ENCODE measurements at regions of chr21 and their contacts with region 1.

Region 1: DNA sequence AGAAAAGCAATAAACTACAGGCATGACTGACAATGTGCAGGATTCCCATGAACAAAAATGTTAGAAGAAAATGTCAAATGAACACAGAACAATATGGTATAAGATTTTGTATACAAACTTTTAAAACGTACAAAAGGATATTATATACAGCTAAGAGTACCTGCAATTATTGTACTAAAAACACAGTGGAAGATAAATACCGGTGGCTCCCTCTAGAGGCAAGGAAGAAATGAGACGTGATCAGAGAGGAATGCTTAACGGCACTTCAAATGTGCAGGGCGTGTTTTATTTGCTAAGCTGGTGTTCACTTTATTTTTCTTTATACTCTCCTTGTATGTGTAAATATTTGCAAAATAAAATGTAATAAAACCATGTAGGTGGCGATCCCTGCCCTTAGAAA is 191.8 kb upstream of the SAMSN1 start:
- DNase-seq: peak; percentile 67 to 74 (median 71)
- H3K4me3 ChIP-seq: no peak overlapping the region
- H3K4me3 Mint-ChIP-seq: no peak overlapping the region
- H3K27ac ChIP-seq: no peak overlapping the region
- H3K27ac Mint-ChIP-seq: peak overlapping the region in 1 of 7 donors; percentile 57
- H3K4me1 ChIP-seq: peaks cover 4% of the 10 kb centered on the region
- H3K4me1 Mint-ChIP-seq: peaks cover 0 to 9% (median 8%) of the 10 kb centered on the region in 4 donors
- H3K27me3 ChIP-seq: no peaks in the 10 kb centered on the region
- H3K27me3 Mint-ChIP-seq: no peaks in the 10 kb centered on the region

Region 2: GRCh38 chr21:14259747-14260146 is 478.2 kb before region 1 on chr21:
- CTCF ChIA-PET with region 1: interaction called, 4 read pairs
- POLR2A ChIA-PET with region 1: no interaction called
- intact Hi-C with region 1: loop called (anchors 2 kb)
- DNase-seq: peak in 3 of 5 donors; percentile 6 to 24 (median 11)
- H3K4me3 ChIP-seq: no peak overlapping the region
- H3K4me3 Mint-ChIP-seq: no peak overlapping the region
- H3K27ac ChIP-seq: no peak overlapping the region
- H3K27ac Mint-ChIP-seq: no peak overlapping the region
- H3K4me1 ChIP-seq: no peaks in the 10 kb centered on the region
- H3K4me1 Mint-ChIP-seq: no peaks in the 10 kb centered on the region
- H3K27me3 ChIP-seq: no peaks in the 10 kb centered on the region
- H3K27me3 Mint-ChIP-seq: peaks cover 3 to 10% of the 10 kb centered on the region in 2 donors

Region 3: GRCh38 chr21:14454016-14455009 is 283.6 kb before region 1 on chr21:
- CTCF ChIA-PET with region 1: interaction called, 10 read pairs
- POLR2A ChIA-PET with region 1: no interaction called
- intact Hi-C with region 1: loop called (anchors 5 kb)
- DNase-seq: no peak
- H3K4me3 ChIP-seq: no peak overlapping the region
- H3K4me3 Mint-ChIP-seq: peak overlapping the region in 4 of 8 donors; percentile 3 to 42 (median 27)
- H3K27ac ChIP-seq: no peak overlapping the region
- H3K27ac Mint-ChIP-seq: peak overlapping the region in 4 of 7 donors; percentile 5 to 58 (median 46)
- H3K4me1 ChIP-seq: peaks cover 21% of the 10 kb centered on the region
- H3K4me1 Mint-ChIP-seq: peaks cover 20 to 30% (median 24%) of the 10 kb centered on the region in 4 donors
- H3K27me3 ChIP-seq: no peaks in the 10 kb centered on the region
- H3K27me3 Mint-ChIP-seq: no peaks in the 10 kb centered on the region

Region 4: DNA sequence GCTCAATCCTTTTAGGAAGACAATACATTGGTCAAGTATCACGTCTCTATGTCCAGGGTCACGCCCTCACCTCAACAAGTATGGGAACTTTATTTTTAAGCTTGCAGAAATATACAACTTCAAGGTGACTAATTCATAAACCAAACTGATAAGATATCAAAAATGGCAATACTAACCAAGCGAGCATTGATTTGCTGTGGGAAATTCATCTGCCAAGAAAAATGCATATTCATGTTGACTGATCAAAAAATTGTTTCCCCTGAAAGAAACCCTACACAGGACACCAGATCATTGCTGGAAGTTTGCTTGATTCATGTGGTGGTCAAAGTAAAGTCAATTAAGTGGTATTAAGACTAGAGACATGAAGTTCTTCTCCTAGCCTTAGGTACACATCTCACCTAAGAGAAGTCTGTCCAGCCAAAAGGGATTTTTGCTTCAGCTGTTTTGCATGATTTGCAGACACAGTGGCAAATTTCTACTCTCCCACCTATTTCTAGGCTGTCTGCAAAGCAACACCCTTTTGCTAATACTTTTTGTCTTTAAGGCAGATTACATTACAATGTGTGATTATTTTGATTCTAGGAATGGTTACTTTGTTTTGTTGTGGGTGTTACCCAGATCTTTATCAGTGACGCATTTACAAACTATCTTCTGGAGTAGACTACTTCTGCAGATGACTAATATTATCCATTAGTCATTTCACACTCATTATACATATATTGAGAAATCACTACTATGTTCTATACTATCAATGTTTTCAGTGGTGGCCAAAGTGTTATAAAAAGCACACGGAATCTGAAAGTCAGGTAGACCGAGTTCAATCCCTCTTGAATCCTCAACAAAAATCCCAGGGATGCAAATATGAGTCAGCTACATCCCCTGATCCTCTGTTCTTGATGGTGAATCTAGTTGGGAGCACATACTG is 204.2 kb before region 1 on chr21:
- CTCF ChIA-PET with region 1: interaction called, 10 read pairs
- POLR2A ChIA-PET with region 1: interaction called, 5 read pairs
- intact Hi-C with region 1: no loop called
- DNase-seq: peak; percentile 78 to 87 (median 83)
- H3K4me3 ChIP-seq: peak overlapping the region; percentile 33 to 48
- H3K4me3 Mint-ChIP-seq: peak overlapping the region; percentile 84 to 96 (median 90)
- H3K27ac ChIP-seq: peak overlapping the region; percentile 87
- H3K27ac Mint-ChIP-seq: peak overlapping the region; percentile 97 to 100 (median 98)
- H3K4me1 ChIP-seq: peaks cover 60% of the 10 kb centered on the region
- H3K4me1 Mint-ChIP-seq: peaks cover 50 to 77% (median 59%) of the 10 kb centered on the region in 4 donors
- H3K27me3 ChIP-seq: no peaks in the 10 kb centered on the region
- H3K27me3 Mint-ChIP-seq: peaks cover 0 to 1% of the 10 kb centered on the region in 2 donors

Region 5: DNA sequence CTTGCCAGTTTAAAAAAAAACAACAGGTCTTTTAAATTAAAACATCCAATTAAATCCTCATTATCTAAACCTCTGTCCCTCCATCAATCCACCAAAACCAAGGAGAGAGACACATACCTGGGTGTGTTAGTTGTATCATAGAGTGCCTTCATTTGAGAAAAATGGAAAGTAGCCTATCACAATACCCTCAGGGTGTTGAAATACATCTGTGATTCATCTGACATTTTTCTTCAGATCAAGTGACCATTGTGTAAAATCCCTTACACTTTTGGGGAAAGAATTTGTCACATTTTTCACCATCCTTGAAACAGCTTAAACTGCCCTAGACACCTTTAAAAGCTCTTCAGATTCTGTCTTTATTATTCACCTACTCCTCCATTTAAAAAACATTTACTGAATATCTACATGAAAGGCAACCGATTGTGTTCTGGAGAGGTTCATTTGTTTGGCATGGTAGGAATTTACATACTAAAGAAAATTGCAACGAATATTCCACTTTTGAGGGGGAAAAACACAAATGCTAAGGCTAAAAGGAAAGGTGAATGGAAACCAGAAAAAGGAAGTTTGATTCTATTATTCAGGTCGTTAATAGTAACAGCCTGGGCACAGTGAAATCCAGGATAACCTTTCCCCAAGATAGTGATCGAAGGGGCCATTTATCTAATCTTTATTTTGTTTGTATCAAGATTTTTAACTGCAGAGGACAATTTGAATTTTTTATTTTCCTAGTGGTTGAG is 121.5 kb before region 1 on chr21:
- CTCF ChIA-PET with region 1: interaction called, 3 read pairs
- POLR2A ChIA-PET with region 1: no interaction called
- intact Hi-C with region 1: loop called (anchors 5 kb)
- DNase-seq: no peak
- H3K4me3 ChIP-seq: no peak overlapping the region
- H3K4me3 Mint-ChIP-seq: no peak overlapping the region
- H3K27ac ChIP-seq: no peak overlapping the region
- H3K27ac Mint-ChIP-seq: no peak overlapping the region
- H3K4me1 ChIP-seq: no peaks in the 10 kb centered on the region
- H3K4me1 Mint-ChIP-seq: peaks cover 0 to 18% (median 2%) of the 10 kb centered on the region in 4 donors
- H3K27me3 ChIP-seq: no peaks in the 10 kb centered on the region
- H3K27me3 Mint-ChIP-seq: no peaks in the 10 kb centered on the region

Region 6: DNA sequence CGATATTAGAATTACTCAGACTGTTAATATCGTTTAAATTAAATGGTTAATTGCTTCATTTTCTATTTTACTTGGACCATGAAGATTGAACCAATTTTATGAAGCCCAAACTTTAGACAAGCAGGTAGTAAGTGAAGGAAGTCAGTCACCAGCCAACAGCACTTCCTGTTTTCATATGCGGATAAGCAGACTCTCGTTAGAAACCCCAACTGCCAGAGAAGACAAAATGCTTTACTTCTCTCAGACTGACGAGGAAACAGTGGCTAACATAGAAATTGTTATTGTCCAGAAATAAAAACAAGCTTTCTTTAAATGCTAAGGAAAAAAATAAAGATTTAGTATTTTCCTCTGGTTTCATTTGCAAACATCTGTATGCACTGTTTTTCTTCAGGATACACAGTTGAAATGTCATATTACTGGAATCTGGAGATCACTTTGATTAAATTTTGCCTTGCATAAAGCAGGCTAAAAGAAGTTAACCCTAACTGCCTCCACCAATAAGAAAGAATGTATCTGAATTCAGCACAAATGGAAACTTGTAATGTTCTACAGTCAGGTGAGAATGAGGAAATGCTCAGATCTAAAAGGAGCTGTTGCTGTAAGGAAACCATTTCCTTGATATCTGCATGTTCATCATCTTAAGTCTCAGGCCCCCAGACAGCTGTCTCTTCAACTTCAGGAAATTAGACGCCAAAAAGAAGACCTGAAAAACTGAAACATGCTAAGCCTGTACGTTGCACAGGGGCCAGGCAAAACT is 62.0 kb before region 1 on chr21:
- CTCF ChIA-PET with region 1: interaction called, 23 read pairs
- POLR2A ChIA-PET with region 1: interaction called, 3 read pairs
- intact Hi-C with region 1: loop called (anchors 5 kb)
- DNase-seq: peak; percentile 45 to 70 (median 62)
- H3K4me3 ChIP-seq: peak overlapping the region in 1 of 2 donors; percentile 37
- H3K4me3 Mint-ChIP-seq: peak overlapping the region; percentile 8 to 79 (median 54)
- H3K27ac ChIP-seq: peak overlapping the region; percentile 48
- H3K27ac Mint-ChIP-seq: peak overlapping the region; percentile 87 to 98 (median 94)
- H3K4me1 ChIP-seq: peaks cover 34% of the 10 kb centered on the region
- H3K4me1 Mint-ChIP-seq: peaks cover 33 to 45% (median 34%) of the 10 kb centered on the region in 4 donors
- H3K27me3 ChIP-seq: no peaks in the 10 kb centered on the region
- H3K27me3 Mint-ChIP-seq: no peaks in the 10 kb centered on the region

Region 7: DNA sequence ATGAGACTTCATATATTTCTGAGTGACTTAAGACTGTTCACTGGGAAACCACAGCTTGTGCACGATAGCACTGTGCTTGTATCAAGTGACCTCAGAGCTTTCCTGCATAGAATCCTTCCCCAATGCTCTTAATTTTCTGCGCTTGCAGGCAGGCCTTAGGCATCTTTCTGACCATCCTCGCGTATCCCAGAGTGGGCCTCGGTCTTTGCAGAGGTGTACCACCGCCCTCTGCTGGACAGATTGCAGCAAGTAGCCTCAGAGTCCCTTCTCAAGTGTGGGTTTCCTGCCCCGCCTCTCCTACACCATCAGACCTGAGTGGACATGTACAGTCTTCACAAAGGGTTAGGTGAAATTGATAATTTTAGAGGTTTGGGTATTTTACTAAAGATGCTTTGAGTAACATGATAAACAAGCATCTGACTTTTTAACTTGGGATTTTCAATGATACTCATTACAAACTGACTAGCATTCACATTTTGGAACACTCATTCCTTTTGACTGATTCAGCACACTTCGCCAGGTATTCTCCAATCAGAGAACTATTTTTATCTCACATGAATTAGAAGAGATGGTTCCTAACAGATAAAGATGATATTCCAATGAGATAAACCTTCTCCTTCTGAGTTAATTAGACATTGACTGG is 745.3 kb after region 1 on chr21:
- CTCF ChIA-PET with region 1: interaction called, 4 read pairs
- POLR2A ChIA-PET with region 1: no interaction called
- intact Hi-C with region 1: loop called (anchors 1 kb)
- DNase-seq: peak; percentile 62 to 68 (median 65)
- H3K4me3 ChIP-seq: no peak overlapping the region
- H3K4me3 Mint-ChIP-seq: peak overlapping the region in 3 of 8 donors; percentile 4 to 32 (median 24)
- H3K27ac ChIP-seq: no peak overlapping the region
- H3K27ac Mint-ChIP-seq: peak overlapping the region in 1 of 7 donors; percentile 61
- H3K4me1 ChIP-seq: peaks cover 5% of the 10 kb centered on the region
- H3K4me1 Mint-ChIP-seq: peaks cover 10 to 21% (median 15%) of the 10 kb centered on the region in 4 donors
- H3K27me3 ChIP-seq: no peaks in the 10 kb centered on the region
- H3K27me3 Mint-ChIP-seq: no peaks in the 10 kb centered on the region

Measured in CD4-positive, alpha-beta memory T cell (primary cell).